ENCODE measurements at regions of chr20 and their contacts with region 1.

Region 1: DNA sequence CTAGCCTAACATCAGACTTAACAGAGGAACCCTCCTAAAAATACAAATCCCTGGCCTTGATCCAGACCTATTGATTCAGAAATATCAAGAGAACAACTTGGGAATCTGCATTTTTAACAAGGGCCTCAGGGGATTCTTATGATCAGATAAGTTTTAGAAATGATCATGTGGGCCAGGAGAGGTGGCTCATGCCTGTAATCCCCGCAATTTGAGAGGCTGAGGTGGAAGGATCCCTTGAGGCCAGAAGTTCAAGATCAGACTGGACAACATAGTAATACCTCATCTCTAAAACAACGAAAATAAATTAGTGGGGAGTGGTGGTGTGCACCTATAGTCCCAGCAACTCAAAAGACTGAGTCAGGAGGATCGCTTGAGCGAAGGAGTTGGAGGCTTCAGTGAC is 267.2 kb downstream of the BMP7 start:
- DNase-seq: no peak

Region 2: GRCh38 chr20:57024849-57025636 is 25.8 kb after region 1 on chr20:
- intact Hi-C with region 1: loop called in 1 of 2 experiments (anchors 1 kb)
- DNase-seq: no peak

Region 3: GRCh38 chr20:57048027-57048869 is 49.0 kb after region 1 on chr20:
- intact Hi-C with region 1: no loop called
- DNase-seq: no peak